ENCODE measurements at regions of chr5 and their contacts with region 1.

Region 1: GRCh38 chr5:172006321-172007174 is at the start of gene FBXW11:
- DNase-seq: peak; percentile 93
- H3K4me3 Mint-ChIP-seq: peak within 1 kb of the TSS; percentile 95
- H3K27ac Mint-ChIP-seq: peak within 1 kb of the TSS; percentile 95
- H3K4me1 Mint-ChIP-seq: peaks cover 57% of the 10 kb centered on the region
- H3K27me3 Mint-ChIP-seq: no peaks in the 10 kb centered on the region
- total RNA-seq, gene FBXW11: 55.6 and 57.9 TPM in 2 replicates

Region 2: GRCh38 chr5:171418316-171418981 is 588.1 kb before region 1 on chr5:
- intact Hi-C with region 1: loop called (anchors 2 kb)
- DNase-seq: peak; percentile 45
- H3K4me3 Mint-ChIP-seq: peak overlapping the region; percentile 62
- H3K27ac Mint-ChIP-seq: no peak overlapping the region
- H3K4me1 Mint-ChIP-seq: peaks cover 5% of the 10 kb centered on the region
- H3K27me3 Mint-ChIP-seq: peaks cover 24% of the 10 kb centered on the region

Region 3: DNA sequence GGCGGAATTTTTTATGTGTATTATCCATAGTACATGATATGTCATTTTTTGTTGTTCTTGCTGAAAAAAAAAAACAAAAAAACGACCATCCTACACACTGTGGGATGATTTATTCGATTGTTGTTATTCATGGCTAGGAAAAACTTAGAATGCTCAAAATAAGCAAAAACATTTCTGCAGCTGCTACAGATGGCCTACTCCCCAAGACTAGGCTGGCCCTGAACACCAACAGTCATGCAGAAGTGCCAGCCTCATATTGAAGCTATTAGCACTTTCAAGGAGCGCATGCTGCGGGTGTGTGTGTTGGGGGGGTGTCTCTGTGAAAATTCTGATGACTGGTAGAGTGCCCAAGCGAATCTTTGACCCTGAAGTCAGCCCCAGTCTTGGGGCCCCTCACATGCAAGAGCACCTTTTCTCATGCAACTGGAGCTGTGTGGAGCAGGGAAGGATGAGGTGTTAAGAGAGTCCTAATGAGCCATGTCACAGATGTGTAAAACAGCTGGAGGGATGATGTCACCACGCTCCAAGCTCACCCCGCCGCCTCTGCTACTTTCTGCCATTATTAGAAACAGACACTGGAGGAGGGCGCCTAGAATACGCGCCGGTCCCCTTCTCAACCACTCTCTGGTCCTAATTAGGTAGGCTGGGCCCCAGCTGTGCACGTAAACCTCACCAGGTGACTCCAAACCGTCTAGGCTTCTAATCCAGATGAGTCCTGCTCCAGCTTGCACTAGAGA is 281.9 kb before region 1 on chr5:
- intact Hi-C with region 1: no loop called
- DNase-seq: no peak
- H3K4me3 Mint-ChIP-seq: no peak overlapping the region
- H3K27ac Mint-ChIP-seq: no peak overlapping the region
- H3K4me1 Mint-ChIP-seq: no peaks in the 10 kb centered on the region
- H3K27me3 Mint-ChIP-seq: peaks cover 8% of the 10 kb centered on the region

Region 4: DNA sequence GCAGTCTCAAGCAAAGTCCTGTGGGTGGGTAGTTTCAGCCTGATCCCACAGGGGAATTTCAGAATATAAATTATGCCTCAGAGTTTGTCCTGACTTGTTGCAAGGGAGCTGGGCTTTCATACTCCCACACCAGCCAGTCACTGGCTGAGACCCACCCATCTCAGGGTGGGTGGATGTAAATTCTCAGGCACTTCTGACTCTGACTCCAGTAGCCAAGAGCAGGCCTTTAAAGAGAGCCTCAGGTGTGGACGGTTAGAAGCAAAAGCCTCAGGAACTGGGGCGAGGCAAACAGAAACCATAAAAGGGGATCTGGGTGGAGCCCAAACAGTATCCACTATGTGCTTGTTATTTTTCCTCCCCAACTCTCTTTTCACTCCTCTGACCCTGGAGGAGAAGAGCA is 28.5 kb after region 1 on chr5:
- intact Hi-C with region 1: loop called (anchors 1 kb)
- DNase-seq: no peak
- H3K4me3 Mint-ChIP-seq: no peak overlapping the region
- H3K27ac Mint-ChIP-seq: peak overlapping the region; percentile 20
- H3K4me1 Mint-ChIP-seq: peaks cover 13% of the 10 kb centered on the region
- H3K27me3 Mint-ChIP-seq: peaks cover 2% of the 10 kb centered on the region

Region 5: DNA sequence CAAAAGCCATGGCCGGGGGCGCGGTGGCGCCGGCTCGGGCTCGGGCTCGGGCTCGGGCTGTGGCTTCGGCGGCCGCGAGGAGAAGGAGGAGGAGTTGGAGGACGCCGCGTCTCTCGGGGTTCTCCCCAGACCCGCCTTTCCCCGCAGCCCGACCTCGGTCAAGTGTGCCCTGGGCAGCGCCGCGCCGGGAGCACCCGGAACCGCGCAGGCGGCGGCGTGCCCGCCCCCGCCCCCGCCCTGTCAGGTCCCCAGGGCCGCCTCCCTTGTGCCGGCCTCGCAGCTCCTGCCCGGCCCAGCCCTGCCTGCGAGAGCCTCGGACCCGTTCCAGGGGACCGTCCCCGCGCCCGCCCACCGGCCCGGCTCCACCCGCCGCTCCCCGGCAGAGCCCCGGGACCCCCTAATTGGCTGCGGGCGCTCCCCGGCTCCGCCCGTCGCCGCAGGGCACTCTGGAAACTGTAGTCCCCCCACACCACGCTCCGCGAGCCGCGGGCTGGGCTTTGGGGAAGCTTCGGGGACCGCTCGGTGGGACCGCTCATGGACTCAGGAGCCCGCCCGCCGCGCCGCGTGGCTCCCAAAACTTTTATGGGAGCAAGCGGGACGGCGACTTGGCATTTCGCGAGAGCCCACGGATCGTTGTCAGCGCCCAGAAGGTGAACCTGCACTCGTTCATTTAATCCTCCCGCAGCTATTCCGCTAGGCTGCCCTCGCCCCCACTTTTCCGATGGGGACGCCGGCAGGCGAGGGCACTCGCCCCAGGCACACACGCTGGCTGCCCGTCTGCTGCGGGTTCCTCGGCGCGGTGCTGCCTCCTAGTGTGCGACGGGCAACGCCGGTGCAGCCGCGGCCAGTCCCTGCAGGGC is 181.7 kb after region 1 on chr5 and contains the start of gene STK10:
- intact Hi-C with region 1: loop called (anchors 1 kb)
- DNase-seq: peak; percentile 86
- H3K4me3 Mint-ChIP-seq: peak within 1 kb of the TSS; percentile 99
- H3K27ac Mint-ChIP-seq: peak within 1 kb of the TSS; percentile 99
- H3K4me1 Mint-ChIP-seq: peaks cover 38% of the 10 kb centered on the region
- H3K27me3 Mint-ChIP-seq: peaks cover 8% of the 10 kb centered on the region
- total RNA-seq, gene STK10: 88.6 and 91.9 TPM in 2 replicates

Region 6: GRCh38 chr5:173331956-173332479 is 1325.5 kb after region 1 on chr5:
- intact Hi-C with region 1: loop called (anchors 10 kb)
- DNase-seq: peak; percentile 86
- H3K4me3 Mint-ChIP-seq: peak overlapping the region; percentile 56
- H3K27ac Mint-ChIP-seq: peak overlapping the region; percentile 79
- H3K4me1 Mint-ChIP-seq: peaks cover 35% of the 10 kb centered on the region
- H3K27me3 Mint-ChIP-seq: peaks cover 11% of the 10 kb centered on the region